ENCODE measurements at regions of chr6 and their contacts with region 1.

Region 1: GRCh38 chr6:152170705-152171667 is 363.5 kb downstream of the ESR1 start:
- DNase-seq: peak; percentile 86
- H3K4me3 Mint-ChIP-seq: peak overlapping the region; percentile 65
- H3K27ac Mint-ChIP-seq: peak overlapping the region; percentile 94
- H3K4me1 Mint-ChIP-seq: peaks cover 19% of the 10 kb centered on the region
- H3K27me3 Mint-ChIP-seq: no peaks in the 10 kb centered on the region

Region 2: DNA sequence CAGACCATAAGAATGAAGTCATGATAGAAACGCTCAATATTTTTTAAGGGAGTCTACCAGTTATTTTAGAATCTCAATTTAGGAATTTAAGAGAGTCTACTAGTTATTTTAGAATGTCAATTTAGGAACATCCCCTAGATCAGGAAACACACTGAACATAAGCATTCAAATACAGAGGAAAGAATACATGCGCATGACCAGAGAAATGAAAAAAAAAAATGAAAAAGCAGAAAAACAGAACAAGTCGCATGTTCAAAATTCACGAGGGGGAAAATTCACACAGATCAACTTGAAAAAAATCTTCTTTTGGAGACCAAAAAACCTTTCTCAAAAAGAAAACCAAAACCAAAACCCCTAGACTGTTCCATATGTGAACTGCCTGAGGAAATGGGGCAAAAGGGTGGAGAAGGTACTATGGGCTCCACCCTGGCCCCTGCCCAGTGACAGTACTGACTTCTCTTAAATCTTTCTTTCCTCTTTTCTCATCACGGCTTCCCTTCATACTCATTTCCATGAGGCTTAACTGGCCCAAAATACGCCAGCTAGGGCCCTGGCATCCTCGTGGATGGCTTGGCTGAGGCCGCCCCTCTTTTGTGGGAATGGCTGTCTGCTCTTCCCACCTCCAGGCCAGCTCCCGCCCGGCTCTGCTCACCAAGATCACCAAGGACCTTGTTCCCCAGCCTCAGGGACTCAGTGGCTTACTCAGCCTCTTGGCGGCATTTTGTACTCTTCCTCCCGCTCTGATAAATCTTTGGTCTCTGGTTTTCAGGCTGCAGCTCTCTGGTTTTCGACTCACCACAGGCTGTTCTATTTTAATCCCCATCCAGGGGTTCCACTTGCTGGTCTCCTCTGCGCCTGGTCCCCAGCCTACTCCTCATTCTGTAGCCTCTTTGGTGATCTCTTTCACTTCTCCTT is 790.8 kb before region 1 on chr6:
- intact Hi-C with region 1: loop called (anchors 5 kb)
- DNase-seq: peak; percentile 81
- H3K4me3 Mint-ChIP-seq: peak overlapping the region; percentile 88
- H3K27ac Mint-ChIP-seq: peak overlapping the region; percentile 96
- H3K4me1 Mint-ChIP-seq: peaks cover 57% of the 10 kb centered on the region
- H3K27me3 Mint-ChIP-seq: no peaks in the 10 kb centered on the region

Region 3: DNA sequence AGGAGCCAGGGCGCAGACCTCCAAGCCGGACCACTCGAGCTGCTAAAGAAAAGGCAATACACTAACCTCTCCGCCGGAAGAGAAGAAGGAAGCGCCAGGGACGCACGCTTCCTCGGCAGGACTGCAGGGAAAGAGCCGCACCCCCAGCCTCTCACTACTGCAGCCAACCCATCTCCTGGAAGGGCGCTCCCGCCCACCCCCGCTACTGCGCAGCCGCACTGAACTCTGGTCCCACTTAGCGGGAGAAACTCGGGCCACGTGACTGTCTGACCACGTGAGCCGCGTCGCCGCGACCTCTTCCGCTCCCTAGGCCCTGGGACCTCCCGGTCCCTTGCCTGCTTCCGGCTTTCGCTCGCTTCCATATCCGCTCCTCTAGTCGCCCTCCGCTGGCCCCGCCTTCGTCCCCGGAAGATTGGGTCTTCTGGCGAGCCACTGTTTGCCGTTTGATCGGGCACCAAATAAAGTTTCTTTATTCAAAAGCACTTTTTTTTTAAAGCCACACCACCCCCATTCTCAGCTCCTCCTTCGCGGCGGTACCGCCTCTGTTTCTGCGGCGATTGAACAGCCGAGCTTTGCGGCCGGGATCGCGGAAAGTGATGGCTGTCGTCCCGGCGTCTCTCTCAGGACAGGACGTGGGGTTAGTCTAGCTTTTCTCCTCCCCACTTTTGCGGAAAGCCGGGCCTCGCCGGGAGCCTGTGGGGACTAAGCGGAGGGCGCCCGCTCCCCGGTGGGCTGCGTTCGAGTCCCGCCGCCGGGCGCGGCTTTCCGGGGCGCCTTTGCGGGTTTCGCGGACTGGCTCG is 718.8 kb before region 1 on chr6 and contains the start of gene RMND1:
- intact Hi-C with region 1: loop called (anchors 10 kb)
- DNase-seq: peak; percentile 100
- H3K4me3 Mint-ChIP-seq: peak within 1 kb of the TSS; percentile 97
- H3K27ac Mint-ChIP-seq: peak within 1 kb of the TSS; percentile 96
- H3K4me1 Mint-ChIP-seq: peaks cover 37% of the 10 kb centered on the region
- H3K27me3 Mint-ChIP-seq: peaks cover 3% of the 10 kb centered on the region
- total RNA-seq, gene RMND1: 22.2 and 22.9 TPM in 2 replicates

Region 4: GRCh38 chr6:151702851-151703611 is 468.0 kb before region 1 on chr6:
- intact Hi-C with region 1: loop called (anchors 1 kb)
- DNase-seq: no peak
- H3K4me3 Mint-ChIP-seq: no peak overlapping the region
- H3K27ac Mint-ChIP-seq: peak overlapping the region; percentile 72
- H3K4me1 Mint-ChIP-seq: peaks cover 27% of the 10 kb centered on the region
- H3K27me3 Mint-ChIP-seq: peaks cover 24% of the 10 kb centered on the region

Region 5: DNA sequence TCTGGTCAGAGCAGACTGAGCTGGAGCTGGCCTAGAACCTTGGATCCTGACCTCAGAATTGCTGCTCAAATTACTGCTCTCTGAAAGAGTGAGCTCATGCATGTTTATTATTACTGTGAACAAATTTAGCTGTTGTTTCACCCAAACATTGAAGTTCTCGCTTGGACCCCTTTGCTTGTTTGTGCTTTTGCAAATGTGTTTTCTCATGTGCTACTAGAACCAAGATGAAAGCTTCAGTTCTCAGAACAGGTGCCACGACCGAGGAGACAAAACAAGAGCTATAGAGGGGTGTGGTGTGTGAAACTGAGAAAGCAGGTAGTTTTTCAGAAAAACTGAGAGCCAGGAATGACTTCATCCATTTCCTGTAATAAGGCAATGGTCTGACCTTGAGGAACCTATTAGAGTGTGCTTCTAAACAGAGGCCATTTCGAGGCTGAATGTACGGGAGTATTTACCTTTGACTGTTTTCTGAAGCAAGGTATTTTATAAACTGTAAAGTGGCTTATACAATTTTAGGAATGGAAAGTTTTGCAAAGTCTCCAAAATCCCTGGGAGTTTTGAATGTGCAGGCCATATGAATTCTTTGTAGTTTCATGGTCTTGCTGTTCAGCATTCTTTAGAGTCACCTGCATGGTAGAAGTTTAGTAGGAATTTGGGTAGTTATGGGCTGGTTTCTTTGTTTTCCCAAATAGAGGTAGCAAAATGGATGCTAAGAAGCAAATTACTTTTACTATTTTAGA is 413.3 kb before region 1 on chr6:
- intact Hi-C with region 1: loop called (anchors 5 kb)
- DNase-seq: peak; percentile 84
- H3K4me3 Mint-ChIP-seq: peak overlapping the region; percentile 67
- H3K27ac Mint-ChIP-seq: peak overlapping the region; percentile 94
- H3K4me1 Mint-ChIP-seq: peaks cover 36% of the 10 kb centered on the region
- H3K27me3 Mint-ChIP-seq: no peaks in the 10 kb centered on the region

Region 6: DNA sequence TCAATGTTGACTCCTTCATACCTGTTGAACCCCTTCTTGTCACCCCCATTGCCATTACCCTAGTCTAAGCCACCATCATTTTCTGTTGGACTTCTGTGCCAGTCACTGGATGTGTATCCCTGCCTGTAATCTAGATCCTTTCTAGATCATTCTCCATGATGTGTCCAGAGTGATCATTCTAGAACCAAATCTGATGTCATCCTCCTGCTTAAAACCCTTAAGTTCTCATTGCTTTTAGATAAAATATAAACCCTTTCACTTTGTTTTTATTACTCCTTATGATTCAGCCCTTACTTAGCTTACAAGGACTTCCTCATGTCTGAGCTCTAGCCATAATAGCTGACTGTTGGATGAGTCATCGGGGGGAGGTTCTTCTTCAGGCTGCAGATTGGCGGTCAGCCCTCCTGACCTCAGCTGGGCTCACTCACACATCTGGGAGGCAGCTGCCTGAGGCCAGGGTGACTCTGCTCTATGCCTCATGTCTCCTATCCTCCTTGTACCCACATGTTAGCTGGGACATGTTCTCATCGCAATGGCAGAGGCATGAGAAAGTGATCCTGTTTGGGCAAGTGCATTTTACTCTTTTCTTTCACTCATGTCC is 75.9 kb before region 1 on chr6:
- intact Hi-C with region 1: no loop called
- DNase-seq: no peak
- H3K4me3 Mint-ChIP-seq: no peak overlapping the region
- H3K27ac Mint-ChIP-seq: no peak overlapping the region
- H3K4me1 Mint-ChIP-seq: no peaks in the 10 kb centered on the region
- H3K27me3 Mint-ChIP-seq: no peaks in the 10 kb centered on the region

Region 7: DNA sequence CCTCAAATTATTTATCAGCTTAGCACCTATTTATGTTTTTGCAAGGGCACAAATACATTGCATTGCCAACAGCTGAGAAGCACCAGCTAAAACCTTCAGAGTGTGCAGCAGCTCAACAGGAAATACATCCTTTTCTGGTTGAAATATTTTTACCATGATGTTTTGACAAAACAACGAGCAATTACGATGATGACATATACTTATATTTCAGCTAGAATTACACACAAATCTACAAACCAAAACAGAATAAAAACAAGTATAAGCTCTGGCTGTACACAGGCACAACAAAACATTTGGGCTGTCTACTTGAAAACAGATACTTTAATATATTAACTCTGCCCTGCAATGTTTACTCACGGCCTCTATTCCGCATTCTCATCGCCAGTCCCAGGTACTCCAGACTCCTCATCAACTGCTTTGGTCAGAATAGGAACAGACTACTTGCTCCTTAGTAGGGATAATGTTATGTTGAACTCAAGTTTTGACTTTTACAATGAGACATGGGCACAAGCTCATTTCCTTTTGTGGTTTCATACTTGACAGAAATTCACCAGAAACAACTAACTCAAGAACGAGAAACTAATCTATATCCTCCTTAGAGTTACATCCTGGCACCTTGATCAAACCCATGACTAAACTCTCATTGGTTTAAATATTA is 14.1 kb after region 1 on chr6:
- intact Hi-C with region 1: loop called (anchors 1 kb)
- DNase-seq: peak; percentile 74
- H3K4me3 Mint-ChIP-seq: peak overlapping the region; percentile 86
- H3K27ac Mint-ChIP-seq: peak overlapping the region; percentile 96
- H3K4me1 Mint-ChIP-seq: peaks cover 53% of the 10 kb centered on the region
- H3K27me3 Mint-ChIP-seq: no peaks in the 10 kb centered on the region

Region 8: DNA sequence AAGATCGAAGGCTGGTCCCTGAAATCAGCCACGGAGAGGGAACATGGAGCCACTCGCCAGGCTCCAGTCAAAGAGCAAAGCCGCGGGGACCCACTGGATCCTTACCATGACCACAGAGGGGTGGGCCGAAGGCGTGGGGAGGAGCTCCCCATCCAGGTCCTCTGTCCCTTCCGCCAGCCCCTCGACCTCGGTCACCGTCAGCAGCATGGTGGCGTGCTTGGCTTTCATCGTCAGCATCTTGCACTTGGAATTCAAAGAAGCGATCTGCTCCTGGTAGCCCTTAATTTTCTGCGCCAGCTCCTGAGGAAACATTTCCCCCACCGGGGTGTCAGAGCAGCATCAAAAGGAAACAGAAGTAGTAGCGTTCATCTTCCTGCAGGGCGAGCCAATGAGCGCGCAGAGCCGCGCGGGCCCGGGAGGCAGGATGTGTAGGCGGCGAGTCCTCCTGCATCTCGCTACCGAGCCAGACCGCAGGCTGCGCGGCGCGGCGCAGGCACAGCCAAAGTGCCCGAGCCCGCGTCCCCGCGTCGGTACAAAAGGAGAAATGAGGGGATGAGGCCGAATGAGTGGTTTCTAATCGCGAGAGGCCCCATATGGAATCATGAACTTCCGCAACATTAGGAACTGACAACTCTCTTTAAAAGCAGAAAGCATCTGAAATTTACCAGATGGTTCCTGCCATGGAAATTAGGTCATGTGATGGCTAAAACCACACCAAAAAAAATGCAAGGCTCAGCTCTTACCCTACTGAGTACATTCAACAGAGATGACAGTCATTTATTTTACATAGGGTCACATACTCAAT is 131.0 kb after region 1 on chr6:
- intact Hi-C with region 1: loop called (anchors 1 kb)
- DNase-seq: peak; percentile 97
- H3K4me3 Mint-ChIP-seq: peak overlapping the region; percentile 94
- H3K27ac Mint-ChIP-seq: peak overlapping the region; percentile 99
- H3K4me1 Mint-ChIP-seq: peaks cover 23% of the 10 kb centered on the region
- H3K27me3 Mint-ChIP-seq: no peaks in the 10 kb centered on the region

Measured in activated CD4-positive, alpha-beta T cell treated with anti-CD3 and anti-CD28 coated beads, Interleukin-2, amount 10 ng/mL, durations not matched to agents 24 days and 14 days (primary cell).